Activated T-helper 1 cell treated with anti-CD3 and anti-CD28 coated beads, Interleukin-12 subunit alpha, Interleukin-12 subunit beta, Interleukin-2, Interleukin-4 antibody, amounts not matched to agents 30 ng/mL and 10 ng/mL and 1 ng/mL, durations not matched to agents 14 hours and 24 hours and 36 hours (primary cell): ENCODE measurements at regions of chr19 and their contacts with region 1.

Region 1: DNA sequence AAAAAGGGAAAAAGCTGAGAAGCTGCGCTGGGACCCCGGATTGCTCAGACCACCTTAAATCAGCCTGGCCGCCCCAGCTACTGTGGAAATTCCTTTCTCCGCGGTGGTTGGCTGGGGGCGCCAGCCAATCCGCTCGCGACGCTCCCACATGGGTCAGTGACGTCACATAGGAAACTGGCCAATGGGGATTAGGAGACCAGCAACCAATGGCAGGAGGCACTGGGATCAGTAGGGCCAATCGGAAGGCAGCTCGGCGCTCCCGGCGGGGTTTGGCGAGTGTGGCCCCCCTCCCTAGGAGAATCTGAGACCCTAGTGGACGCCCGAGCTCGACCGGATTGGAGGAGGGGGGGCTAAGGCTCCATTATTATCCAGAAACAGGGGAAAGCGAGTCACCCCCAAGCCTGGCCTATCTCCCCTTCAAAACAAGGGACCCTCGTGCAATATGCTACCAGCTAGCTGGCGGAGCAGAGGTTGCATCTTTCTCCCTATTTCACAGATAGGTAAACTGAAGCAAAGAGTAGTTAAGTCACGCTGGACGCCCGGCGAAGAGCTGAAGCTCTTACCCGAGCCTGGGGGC is 6.5 kb upstream of the TLE2 start:
- DNase-seq: peak; percentile 95
- H3K4me3 Mint-ChIP-seq: peak overlapping the region; percentile 94
- H3K27ac Mint-ChIP-seq: peak overlapping the region; percentile 98
- H3K4me1 Mint-ChIP-seq: peaks cover 18% of the 10 kb centered on the region
- H3K27me3 Mint-ChIP-seq: peaks cover 23% of the 10 kb centered on the region

Region 2: DNA sequence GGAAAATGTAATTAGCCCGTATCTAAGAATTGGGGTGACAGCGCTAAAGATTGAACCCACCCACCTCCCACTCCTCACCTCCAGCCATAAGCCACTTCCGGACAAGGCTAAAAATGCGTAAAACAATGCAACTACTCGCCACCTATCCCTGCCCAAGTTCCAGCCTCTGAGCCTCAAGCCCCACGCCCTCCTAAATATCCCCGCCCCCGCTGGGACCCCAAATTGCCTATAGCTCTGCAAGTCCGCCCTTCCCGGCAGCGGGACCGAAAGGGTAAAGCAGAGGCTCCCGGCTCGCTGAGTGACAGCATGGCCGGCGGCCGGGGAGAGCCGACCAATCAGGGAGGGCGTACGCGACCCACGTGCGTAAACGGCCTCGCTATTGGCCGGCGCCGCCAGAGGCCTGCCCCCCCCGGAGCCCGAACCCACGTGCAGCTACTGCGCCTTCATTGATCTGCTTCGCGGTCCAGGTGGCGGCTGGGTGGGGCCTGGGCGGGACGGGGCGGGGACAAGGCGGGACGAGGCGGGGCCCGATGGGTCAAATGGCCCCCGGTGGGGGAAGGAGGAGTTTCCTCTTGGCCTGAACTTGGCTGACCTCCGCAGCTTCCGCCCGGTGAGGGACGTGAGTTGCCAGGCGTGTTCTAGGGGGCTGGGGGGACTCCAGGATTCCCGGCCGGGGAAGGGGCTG is 58.5 kb before region 1 on chr19 and contains the start of gene TLE6:
- intact Hi-C with region 1: loop called (anchors 1 kb)
- DNase-seq: peak; percentile 89
- H3K4me3 Mint-ChIP-seq: peak within 1 kb of the TSS; percentile 92
- H3K27ac Mint-ChIP-seq: peak within 1 kb of the TSS; percentile 86
- H3K4me1 Mint-ChIP-seq: peaks cover 18% of the 10 kb centered on the region
- H3K27me3 Mint-ChIP-seq: peaks cover 37% of the 10 kb centered on the region
- total RNA-seq, gene TLE6: 0.57 and 0.83 TPM in 2 replicates

Region 3: DNA sequence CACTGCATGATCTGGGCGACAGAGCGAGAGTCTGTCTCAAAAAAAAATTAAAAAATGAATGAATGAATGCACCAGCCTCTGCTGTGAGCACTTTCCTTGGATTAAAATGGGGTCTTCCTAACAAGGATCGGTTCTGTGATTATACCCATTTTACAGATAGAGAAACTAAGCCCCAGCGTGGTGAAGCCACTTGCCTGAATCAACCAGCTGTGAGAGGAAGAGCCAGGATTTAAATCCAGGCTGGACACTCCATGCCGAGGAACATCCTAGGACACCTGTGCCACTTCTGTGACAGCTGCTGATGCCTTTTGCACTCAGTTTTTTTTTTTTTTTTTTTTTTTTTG is 12.5 kb after region 1 on chr19:
- intact Hi-C with region 1: no loop called
- DNase-seq: no peak
- H3K4me3 Mint-ChIP-seq: no peak overlapping the region
- H3K27ac Mint-ChIP-seq: no peak overlapping the region
- H3K4me1 Mint-ChIP-seq: peaks cover 7% of the 10 kb centered on the region
- H3K27me3 Mint-ChIP-seq: peaks cover 14% of the 10 kb centered on the region

Region 4: DNA sequence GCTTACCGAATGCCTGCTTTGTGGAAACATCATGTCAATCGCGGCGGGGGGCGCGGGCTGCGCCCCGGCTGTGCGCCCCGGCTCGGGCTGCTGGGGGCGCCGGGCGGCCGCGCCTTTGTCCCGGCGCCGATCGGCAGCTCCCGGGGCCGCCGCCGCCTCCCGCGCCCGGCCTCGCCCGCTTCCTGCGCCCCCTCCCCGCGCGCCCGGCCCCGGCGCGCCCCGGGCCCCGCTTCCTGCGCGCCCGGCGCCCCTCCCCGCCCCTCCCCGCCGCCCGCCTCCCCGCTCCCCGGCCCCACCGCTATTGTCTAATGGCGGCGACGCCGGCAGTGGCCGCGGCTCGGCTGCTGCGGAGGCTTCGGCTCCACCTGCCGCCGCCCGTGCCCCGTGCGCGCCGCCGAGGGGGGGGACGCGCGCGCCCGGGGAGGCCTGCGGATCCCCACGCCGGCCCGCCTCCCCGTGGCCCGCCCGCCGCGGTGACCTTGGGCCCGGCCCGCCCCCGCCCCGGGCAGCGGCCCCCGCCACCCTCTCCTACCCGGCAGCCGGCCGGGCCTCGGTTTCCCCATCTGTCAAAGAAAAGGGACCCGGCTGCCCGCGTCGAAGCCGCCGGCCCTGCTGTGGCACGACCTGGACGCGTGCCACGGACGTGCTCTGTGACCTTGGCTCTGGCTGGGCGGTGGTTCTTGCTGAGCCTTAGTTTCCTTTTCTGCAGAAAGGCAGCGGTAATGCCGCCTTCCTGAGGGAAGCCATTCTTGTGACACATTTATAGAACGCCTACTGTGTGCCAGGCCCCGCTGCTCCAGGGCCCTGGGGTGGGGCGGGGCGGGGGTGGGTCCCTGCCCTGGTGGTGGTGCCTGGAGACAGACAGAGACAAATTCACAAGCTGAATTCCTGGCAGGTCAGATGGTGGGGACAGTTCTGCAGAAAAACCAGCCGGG is 26.8 kb after region 1 on chr19 and contains the start of gene TLE5:
- intact Hi-C with region 1: loop called (anchors 1 kb)
- DNase-seq: peak; percentile 68
- H3K4me3 Mint-ChIP-seq: peak within 1 kb of the TSS; percentile 91
- H3K27ac Mint-ChIP-seq: peak within 1 kb of the TSS; percentile 99
- H3K4me1 Mint-ChIP-seq: peaks cover 20% of the 10 kb centered on the region
- H3K27me3 Mint-ChIP-seq: no peaks in the 10 kb centered on the region
- total RNA-seq, gene TLE5: 378 and 399 TPM in 2 replicates

Region 5: DNA sequence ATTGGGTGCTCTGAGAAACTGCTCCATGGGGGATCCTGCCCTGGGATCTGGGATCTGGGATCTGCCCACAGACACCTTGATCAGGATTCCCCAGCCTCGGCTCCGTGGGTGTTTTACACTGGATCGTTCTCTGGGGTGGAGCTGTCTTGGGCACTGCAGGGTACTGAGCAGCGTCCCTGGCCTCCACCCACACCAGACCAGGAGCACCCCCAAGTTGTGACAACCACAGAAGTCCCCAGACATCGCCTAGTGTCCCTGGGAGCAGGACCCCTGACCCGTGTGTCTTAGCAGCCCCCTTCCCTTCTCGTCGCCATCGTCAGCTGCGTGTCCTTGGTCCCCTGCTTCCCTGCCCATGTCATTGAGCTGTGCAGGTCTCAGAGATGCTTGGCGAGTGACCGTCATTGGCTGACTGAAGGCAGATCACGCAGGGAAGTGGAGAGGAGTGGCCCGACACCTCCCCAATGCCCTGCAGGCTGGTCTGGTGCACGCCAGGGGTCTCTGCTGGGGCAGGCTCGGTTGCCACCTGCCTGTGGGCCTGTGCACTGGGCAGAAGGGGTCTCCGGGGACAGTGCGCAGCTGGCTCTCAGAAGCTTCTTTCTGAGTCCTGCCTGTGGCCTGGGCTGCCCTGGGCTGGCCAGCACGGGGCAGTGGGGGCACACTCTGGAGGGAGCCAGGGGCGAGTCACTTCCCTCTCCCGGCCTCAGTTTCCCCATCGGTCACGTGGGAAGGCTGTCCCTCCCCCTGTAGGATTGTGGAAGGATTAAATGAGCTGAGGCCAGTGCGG is 64.6 kb after region 1 on chr19:
- intact Hi-C with region 1: loop called (anchors 5 kb)
- DNase-seq: no peak
- H3K4me3 Mint-ChIP-seq: no peak overlapping the region
- H3K27ac Mint-ChIP-seq: no peak overlapping the region
- H3K4me1 Mint-ChIP-seq: peaks cover 17% of the 10 kb centered on the region
- H3K27me3 Mint-ChIP-seq: peaks cover 36% of the 10 kb centered on the region

Region 6: GRCh38 chr19:3185482-3186376 is 150.1 kb after region 1 on chr19 and contains the start of gene NCLN:
- intact Hi-C with region 1: loop called (anchors 1 kb)
- DNase-seq: peak; percentile 91
- H3K4me3 Mint-ChIP-seq: peak within 1 kb of the TSS; percentile 93
- H3K27ac Mint-ChIP-seq: peak within 1 kb of the TSS; percentile 90
- H3K4me1 Mint-ChIP-seq: peaks cover 45% of the 10 kb centered on the region
- H3K27me3 Mint-ChIP-seq: no peaks in the 10 kb centered on the region
- total RNA-seq, gene NCLN: 112 and 118 TPM in 2 replicates